ENCODE measurements at regions of chr14 and their contacts with region 1.

Region 1: GRCh38 chr14:52961060-52961639 is 10.3 kb upstream of the FERMT2 start:
- DNase-seq: peak; percentile 88
- ATAC-seq: peak; percentile 90
- H3K4me3 ChIP-seq: peak overlapping the region; percentile 8; the same call in 1 of the 2 replicates
- H3K27ac ChIP-seq: peak overlapping the region; percentile 58
- H3K4me1 ChIP-seq: peaks cover 23% of the 10 kb centered on the region
- H3K27me3 ChIP-seq: no peaks in the 10 kb centered on the region
- CTCF ChIP-seq: peak; percentile 90

Region 2: GRCh38 chr14:52824507-52824906 is 136.6 kb before region 1 on chr14:
- CTCF ChIA-PET with region 1: interaction called, 10 read pairs
- POLR2A ChIA-PET with region 1: interaction called, 3 read pairs
- intact Hi-C with region 1: loop called (anchors 1 kb)
- DNase-seq: no peak
- ATAC-seq: no peak
- H3K4me3 ChIP-seq: no peak overlapping the region
- H3K27ac ChIP-seq: no peak overlapping the region
- H3K4me1 ChIP-seq: no peaks in the 10 kb centered on the region
- H3K27me3 ChIP-seq: no peaks in the 10 kb centered on the region
- CTCF ChIP-seq: no peak

Region 3: DNA sequence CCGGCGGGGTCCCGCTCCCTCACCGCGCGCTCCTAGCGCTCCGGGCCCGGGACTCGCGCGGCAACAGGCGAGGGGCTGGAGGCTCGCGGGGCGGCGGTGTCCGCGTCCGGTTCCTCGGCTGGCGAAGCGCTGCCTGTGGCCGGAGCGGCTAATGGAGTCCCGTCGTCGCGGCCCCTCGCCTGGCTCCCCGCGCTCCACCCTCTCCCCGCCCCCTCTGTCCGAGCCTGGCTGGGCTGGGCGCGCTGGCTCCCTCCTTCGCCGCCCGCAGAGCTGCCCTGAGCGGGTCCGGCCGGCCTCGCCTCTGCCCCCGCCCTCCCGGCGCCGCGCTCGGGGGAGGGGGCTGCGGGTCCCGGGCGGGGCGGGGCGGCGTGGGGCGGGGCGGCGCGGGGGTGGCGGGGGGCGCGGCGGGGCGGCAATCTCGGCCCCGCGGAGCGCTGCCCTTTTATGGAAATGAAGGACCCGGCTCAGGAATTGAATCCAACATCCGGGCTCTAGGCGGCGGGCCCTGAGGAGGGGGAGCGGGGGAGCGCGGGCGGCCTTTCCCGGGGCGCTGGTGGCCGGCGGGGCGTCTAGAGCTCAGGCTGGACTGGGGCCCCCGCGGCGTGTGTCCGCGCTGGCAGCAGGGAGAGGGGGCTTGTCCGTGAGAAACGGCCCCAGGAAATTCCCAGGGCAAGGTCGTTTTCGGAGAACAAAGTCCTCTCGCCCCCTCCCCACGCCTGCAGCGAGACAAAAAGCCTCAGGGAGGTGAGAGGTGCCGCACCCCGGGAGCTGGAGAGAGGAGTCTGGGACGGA is 10.1 kb before region 1 on chr14 and contains the start of gene FERMT2:
- CTCF ChIA-PET with region 1: interaction called, 10 read pairs
- POLR2A ChIA-PET with region 1: no interaction called
- intact Hi-C with region 1: loop called (anchors 1 kb)
- DNase-seq: peak; percentile 83
- ATAC-seq: peak; percentile 90
- H3K4me3 ChIP-seq: peak within 1 kb of the TSS; percentile 82
- H3K27ac ChIP-seq: peak within 1 kb of the TSS; percentile 80
- H3K4me1 ChIP-seq: peaks cover 25% of the 10 kb centered on the region
- H3K27me3 ChIP-seq: no peaks in the 10 kb centered on the region
- CTCF ChIP-seq: no peak
- total RNA-seq, gene FERMT2: 29.1 and 38.6 TPM in 2 replicates

Region 4: DNA sequence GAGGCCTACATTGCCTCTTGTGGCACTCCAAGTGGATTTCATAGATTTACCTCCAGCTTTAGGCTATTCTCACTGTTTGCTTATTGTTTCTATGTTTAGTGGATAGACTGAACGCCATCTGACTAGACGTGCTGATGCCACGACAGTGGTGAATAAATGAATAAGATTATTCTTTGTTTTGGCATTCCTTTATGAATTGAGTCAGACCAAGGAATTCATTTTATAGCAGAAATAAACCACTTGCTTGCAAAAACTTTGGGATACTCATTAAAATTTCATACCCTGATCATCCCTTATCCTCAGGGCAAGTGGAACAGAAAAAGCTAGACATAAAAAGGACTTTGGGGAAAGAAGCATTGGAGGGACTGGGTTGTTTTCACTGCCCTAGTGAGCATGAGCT is 61.4 kb after region 1 on chr14:
- CTCF ChIA-PET with region 1: no interaction called
- POLR2A ChIA-PET with region 1: no interaction called
- intact Hi-C with region 1: loop called (anchors 2 kb)
- DNase-seq: peak; percentile 87
- ATAC-seq: peak; percentile 96
- H3K4me3 ChIP-seq: no peak overlapping the region
- H3K27ac ChIP-seq: peak overlapping the region; percentile 17
- H3K4me1 ChIP-seq: peaks cover 19% of the 10 kb centered on the region
- H3K27me3 ChIP-seq: no peaks in the 10 kb centered on the region
- CTCF ChIP-seq: no peak

Region 5: DNA sequence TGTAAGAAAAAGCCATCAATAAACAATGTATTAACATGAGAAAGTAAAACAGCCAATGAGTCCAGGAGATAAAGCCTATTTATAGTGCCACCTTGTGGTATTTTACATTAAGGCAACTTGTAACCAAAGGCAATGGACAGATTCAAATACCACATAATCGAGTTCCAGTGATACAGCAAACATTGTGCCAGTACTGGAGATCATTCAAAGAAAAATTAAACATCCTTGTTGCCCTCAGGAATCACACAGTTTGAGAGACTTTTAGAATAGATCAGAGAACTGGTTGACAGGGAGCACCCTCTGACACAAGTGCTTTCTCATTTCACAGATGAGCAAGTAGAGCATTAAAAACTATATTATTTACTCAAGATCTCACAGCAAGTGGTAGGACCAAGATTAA is 93.9 kb after region 1 on chr14:
- CTCF ChIA-PET with region 1: interaction called, 7 read pairs
- POLR2A ChIA-PET with region 1: no interaction called
- intact Hi-C with region 1: loop called (anchors 1 kb)
- DNase-seq: peak; percentile 78
- ATAC-seq: peak; percentile 95
- H3K4me3 ChIP-seq: no peak overlapping the region
- H3K27ac ChIP-seq: no peak overlapping the region
- H3K4me1 ChIP-seq: peaks cover 1% of the 10 kb centered on the region; the same call in 1 of the 2 replicates
- H3K27me3 ChIP-seq: no peaks in the 10 kb centered on the region
- CTCF ChIP-seq: peak; percentile 94